G401 (cell line): ENCODE measurements at regions of chr9 and their contacts with region 1.

Region 1: GRCh38 chr9:124764774-124765438 is 6.2 kb downstream of the NR6A1 start:
- DNase-seq: peak; percentile 43

Region 2: DNA sequence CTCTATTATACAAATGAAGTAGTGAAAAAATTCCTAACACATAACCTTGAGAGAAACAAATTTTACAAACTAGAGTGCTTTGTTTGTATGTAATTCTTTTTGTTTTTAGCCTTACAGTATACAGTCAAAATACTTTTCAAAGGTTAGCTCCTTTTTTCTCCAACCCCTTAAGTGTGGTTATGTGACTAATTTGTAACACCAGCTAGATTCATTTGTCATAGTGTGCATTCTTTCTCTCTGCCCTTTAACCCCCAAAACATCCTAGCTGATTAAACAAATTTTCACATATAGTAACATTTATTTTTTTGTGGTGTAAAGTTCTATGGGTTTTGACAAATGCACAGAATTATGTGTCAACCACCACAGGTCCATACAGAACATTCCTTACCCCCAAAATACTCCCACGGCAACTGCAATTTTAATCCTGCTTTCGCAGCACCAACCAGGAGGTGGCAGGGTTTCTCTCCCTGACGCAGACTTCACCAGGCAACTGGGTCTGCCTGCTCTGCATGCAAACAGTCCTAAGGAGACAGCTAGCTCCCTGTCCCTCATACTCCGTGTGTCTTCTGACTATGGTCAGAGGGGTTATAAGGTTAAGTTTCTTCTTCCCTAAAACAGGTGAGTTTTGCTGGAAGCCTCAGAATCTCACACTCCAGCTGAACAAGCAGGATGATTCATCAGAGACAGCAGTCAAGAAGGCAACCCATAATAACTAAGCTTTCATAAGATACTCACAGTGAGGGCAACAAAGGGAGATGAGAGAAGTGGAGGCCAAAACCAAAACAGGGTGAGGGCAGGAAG is 213.2 kb before region 1 on chr9:
- in situ Hi-C with region 1: loop called (anchors 10 kb)
- DNase-seq: peak; percentile 50